ENCODE measurements at regions of chr16 and their contacts with region 1.

Region 1: DNA sequence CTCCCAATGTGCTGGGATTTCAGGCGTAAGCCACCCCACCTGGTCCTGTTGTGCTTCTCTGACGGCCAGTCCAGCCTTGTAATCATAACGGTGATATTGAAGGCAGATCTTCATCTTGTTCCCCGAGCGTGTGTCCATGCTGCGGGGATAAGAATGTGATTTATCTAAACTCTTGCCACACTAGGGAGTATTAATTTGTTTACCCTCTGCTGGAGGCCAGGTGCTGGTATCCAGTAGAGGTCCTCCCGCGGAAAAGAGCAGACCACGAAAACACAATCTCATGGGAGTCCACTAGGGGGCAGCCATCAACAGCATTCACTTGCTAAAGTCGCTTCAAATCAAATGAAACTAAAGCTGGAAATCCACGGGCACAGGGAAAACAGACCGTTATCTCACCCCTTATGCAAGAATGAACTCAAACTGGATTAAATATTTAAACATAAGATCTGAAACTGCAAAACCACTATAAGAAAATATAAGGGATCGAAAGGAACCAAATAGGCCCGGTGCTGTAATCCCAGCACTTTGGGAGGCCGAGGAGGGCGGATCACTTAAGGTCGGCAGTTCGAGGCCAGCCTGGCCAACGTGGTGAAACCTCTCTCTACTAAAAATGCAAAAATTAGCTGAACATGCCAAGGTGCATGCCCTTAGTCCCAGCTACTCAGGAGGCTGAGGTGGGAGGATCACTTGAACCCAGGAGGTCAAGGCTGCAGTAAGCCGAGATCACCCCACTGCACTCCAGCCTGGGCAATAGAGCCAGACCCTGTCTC is 22.3 kb upstream of the RBBP6 start:
- DNase-seq: peak; percentile 84
- ATAC-seq: peak; percentile 79
- H3K4me3 Mint-ChIP-seq: peak overlapping the region; percentile 47
- H3K27ac Mint-ChIP-seq: no peak overlapping the region
- H3K4me1 Mint-ChIP-seq: peaks cover 14% of the 10 kb centered on the region
- H3K27me3 Mint-ChIP-seq: no peaks in the 10 kb centered on the region

Region 2: GRCh38 chr16:24539291-24539849 is 22.3 kb after region 1 on chr16 and contains the start of gene RBBP6:
- CTCF ChIA-PET with region 1: interaction called, 13 read pairs
- POLR2A ChIA-PET with region 1: interaction called, 5 read pairs
- DNase-seq: peak; percentile 93
- ATAC-seq: peak; percentile 88
- H3K4me3 Mint-ChIP-seq: peak within 1 kb of the TSS; percentile 100
- H3K27ac Mint-ChIP-seq: peak within 1 kb of the TSS; percentile 100
- H3K4me1 Mint-ChIP-seq: peaks cover 32% of the 10 kb centered on the region
- H3K27me3 Mint-ChIP-seq: peaks cover 2% of the 10 kb centered on the region
- total RNA-seq, gene RBBP6: 56.5 to 57.1 TPM

Region 3: DNA sequence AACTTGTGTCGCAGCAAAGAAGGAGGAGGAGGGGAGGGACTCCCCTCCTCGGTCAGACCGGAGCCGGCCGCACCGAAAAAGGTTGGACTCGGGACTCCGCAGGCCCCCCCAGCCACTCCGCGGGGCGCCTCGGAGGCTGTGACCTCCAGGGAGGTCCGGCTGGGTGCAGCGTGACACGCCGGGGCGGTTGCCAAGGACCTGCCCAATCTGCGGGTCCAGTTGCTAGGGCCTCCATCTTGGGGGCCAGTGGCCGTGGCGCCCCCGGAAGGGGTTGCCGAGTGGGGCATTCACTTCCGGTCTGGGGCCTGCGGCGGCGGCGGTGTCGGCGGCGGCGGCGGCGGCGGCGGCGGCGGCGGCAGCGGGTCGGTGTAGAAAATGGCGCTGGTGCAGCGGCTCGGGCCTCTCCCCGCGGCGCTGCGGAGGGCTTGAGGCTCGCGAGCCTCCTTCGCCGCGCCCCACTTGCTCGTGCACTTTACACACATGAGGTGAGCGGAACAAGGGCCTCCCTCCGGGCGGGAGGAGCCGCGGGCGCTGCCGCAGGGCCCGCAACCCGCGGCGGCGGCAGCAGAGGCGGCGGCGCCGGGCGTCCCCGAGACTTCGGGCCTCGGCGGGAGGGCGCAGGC is 212.4 kb after region 1 on chr16 and contains the start of gene TNRC6A:
- CTCF ChIA-PET with region 1: no interaction called
- POLR2A ChIA-PET with region 1: no interaction called
- DNase-seq: peak; percentile 80
- ATAC-seq: peak; percentile 81
- H3K4me3 Mint-ChIP-seq: peak within 1 kb of the TSS; percentile 88
- H3K27ac Mint-ChIP-seq: peak within 1 kb of the TSS; percentile 94
- H3K4me1 Mint-ChIP-seq: peaks cover 28% of the 10 kb centered on the region
- H3K27me3 Mint-ChIP-seq: peaks cover 2% of the 10 kb centered on the region
- total RNA-seq, gene TNRC6A: 28.8 to 28.9 TPM

Measured in activated CD8-positive, alpha-beta T cell treated with anti-CD3 and anti-CD28 coated beads, Interleukin-2, amount 10 ng/mL, durations not matched to agents 7 days and 5 days (primary cell).